ENCODE measurements at regions of chr7 and their contacts with region 1.

Region 1: DNA sequence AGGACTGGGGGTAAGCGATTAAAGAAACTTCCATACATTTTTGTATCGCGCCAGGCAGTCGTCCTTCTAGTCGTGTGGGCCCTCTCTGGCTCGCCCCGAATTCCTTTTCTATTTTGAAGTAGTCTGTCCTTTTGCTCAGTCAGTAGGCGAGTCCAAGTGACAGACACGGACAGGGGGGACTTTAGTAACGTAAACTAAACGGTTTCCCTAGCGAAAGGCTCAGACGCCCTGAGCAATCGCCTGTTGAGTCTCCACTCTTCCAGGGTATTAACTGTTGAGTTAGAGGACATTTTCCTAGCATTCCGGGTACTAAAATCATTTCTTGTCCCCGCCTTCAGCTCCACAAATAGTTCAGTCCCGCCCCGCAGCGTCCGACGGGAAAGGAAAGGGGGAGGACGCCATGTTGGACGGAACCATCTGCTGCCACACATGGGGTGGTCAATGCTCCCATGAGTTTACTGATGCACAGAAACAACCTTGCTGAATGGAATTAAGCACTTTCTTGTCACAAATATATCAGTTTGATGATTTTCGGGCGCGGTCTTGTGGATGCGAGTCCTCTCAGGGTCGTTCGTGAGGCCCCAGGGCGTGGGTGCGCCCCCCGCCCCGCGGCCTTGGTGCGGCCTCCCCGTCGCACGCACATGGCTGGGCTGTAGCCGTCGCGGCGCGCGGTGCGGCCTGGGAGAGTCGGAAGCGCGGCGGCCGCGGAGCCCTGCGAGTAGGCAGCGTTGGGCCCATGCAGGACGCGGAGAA is at the start of gene EIF3B:
- DNase-seq: peak; percentile 93
- H3K4me3 Mint-ChIP-seq: peak within 1 kb of the TSS; percentile 98
- H3K27ac Mint-ChIP-seq: peak within 1 kb of the TSS; percentile 100
- H3K4me1 Mint-ChIP-seq: peaks cover 16% of the 10 kb centered on the region
- H3K27me3 Mint-ChIP-seq: no peaks in the 10 kb centered on the region
- CTCF ChIP-seq: no peak
- total RNA-seq, gene EIF3B: 333 and 347 TPM in 2 replicates

Region 2: DNA sequence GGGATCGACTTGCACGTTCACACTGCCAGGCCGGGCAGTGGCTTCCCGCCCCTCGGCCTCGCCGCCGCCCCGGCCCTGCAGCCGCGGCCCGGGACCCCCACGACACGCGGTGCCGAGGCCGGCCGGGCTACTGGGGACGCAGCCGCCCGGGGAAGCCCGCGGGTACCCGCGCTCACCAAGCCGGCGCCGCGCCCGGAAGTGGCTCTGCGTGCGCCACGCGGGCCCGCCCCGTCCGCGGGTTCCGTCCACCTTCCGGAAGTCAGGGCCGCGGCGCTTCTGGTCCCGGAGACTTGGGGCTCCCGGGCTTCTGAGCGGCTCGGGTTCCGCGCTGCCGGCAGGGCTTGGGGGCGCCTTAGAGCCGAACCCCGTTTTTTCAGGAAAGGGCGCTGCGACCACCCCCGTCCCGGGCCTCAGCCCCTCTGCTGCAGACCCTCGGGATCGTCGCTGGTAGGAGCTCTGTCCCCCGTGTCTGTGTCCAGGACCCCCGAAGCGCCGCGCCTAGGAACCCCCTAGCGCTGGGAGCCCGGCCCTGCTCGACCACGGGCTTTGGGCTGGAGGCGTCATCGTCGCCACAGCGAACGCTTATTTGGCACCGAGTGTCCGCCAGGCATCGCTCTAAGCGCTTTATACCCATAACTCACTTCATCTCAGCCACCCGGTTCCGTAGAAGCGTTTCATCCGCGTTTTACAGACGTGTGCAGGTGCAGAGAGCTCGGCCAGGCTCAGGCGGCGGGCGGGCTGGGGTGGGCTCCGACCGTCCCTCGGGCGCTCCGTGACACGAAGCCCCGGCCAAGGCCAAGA is 784.3 kb before region 1 on chr7 and contains the start of gene PSMG3:
- CTCF ChIA-PET with region 1: no interaction called
- intact Hi-C with region 1: loop called (anchors 10 kb)
- DNase-seq: peak; percentile 98
- H3K4me3 Mint-ChIP-seq: peak within 1 kb of the TSS; percentile 80
- H3K27ac Mint-ChIP-seq: peak within 1 kb of the TSS; percentile 76
- H3K4me1 Mint-ChIP-seq: peaks cover 43% of the 10 kb centered on the region
- H3K27me3 Mint-ChIP-seq: no peaks in the 10 kb centered on the region
- CTCF ChIP-seq: peak; percentile 67
- total RNA-seq, gene PSMG3: 64.0 and 67.2 TPM in 2 replicates

Region 3: DNA sequence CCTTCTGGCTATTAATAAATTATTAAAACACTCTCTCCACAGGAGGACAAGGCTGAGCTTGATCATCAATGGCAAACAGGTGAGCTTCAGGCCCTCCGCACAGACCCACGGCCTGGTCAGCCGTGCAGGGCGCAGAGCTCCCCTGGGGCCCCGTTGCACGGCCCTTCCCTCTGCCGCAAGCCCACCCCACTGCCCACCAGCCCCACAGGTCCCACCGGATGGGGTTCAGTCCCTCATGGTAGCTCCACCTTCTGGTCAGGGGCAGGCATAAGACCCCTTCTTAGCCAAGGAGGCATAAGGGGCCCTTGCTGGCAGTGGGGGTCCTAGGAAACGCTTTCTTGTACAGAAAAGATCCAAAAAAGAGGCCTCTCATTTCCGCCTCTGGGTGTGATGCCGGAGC is 206.2 kb before region 1 on chr7:
- CTCF ChIA-PET with region 1: no interaction called
- intact Hi-C with region 1: no loop called
- DNase-seq: no peak
- H3K4me3 Mint-ChIP-seq: no peak overlapping the region
- H3K27ac Mint-ChIP-seq: no peak overlapping the region
- H3K4me1 Mint-ChIP-seq: no peaks in the 10 kb centered on the region
- H3K27me3 Mint-ChIP-seq: no peaks in the 10 kb centered on the region
- CTCF ChIP-seq: peak; percentile 38

Region 4: GRCh38 chr7:2248984-2249694 is 105.2 kb before region 1 on chr7:
- CTCF ChIA-PET with region 1: no interaction called
- intact Hi-C with region 1: loop called (anchors 5 kb)
- DNase-seq: peak; percentile 79
- H3K4me3 Mint-ChIP-seq: peak overlapping the region; percentile 41
- H3K27ac Mint-ChIP-seq: peak overlapping the region; percentile 94
- H3K4me1 Mint-ChIP-seq: peaks cover 18% of the 10 kb centered on the region
- H3K27me3 Mint-ChIP-seq: no peaks in the 10 kb centered on the region
- CTCF ChIP-seq: no peak

Region 5: DNA sequence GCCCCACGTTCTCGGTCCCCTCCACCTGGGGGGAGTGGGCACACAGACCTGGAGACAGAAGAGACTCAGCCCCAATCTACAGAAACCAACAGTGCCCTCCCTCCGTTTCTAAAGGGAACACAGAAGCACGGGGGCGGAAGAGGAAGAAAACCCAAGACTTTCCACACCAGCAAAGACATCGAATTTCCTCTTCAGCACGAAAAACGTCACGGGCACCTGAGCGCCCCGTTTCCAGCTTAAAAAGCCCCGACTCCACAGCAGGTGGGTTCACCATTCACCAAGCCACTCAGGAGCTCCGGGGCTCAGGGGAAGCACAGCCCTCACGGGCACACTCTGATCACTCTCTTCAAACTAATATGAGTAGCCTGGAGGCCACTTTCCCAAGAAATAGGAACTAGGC is 92.8 kb before region 1 on chr7:
- CTCF ChIA-PET with region 1: no interaction called
- intact Hi-C with region 1: no loop called
- DNase-seq: no peak
- H3K4me3 Mint-ChIP-seq: no peak overlapping the region
- H3K27ac Mint-ChIP-seq: no peak overlapping the region
- H3K4me1 Mint-ChIP-seq: peaks cover 9% of the 10 kb centered on the region
- H3K27me3 Mint-ChIP-seq: no peaks in the 10 kb centered on the region
- CTCF ChIP-seq: no peak